Posterior vena cava (tissue), 2 donors: ENCODE measurements at regions of chr1 and their contacts with region 1.

Region 1: DNA sequence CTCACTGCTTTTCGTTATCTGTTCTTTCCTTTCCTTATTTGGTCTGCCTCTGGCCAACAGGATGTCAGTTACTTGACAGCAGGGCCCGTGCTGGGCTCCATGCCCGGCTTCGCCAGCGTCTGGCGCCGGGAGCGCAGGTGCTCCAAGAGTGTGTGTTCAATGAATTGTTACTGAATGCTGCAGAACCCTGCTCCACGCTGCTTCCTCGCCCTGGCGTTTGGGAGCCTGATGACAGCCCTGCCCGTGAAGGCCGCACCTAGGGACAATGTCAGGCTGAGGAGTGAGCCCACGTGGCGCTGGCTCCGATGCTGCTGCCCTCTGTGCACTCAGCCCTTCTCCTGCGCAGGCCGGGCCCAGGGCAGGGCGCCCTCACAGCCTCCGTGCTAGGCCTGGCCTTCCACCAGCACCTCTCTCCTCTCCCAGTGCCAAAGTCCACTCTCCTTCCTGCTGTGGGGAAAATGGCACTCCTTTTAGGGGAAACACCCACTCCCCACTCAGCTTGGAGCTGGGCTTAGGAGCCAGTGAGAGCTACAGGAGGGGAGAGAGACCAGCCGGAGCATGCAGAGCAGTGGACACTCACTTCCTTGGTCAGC is 51.4 kb downstream of the ACBD3 start:
- DNase-seq: no peak

Region 2: GRCh38 chr1:225700164-225700740 is 434.9 kb before region 1 on chr1:
- intact Hi-C with region 1: loop called in 1 of 2 experiments (anchors 10 kb)
- DNase-seq: no peak

Region 3: GRCh38 chr1:226162898-226163297 is 27.7 kb after region 1 on chr1:
- intact Hi-C with region 1: no loop called
- DNase-seq: no peak